ENCODE measurements at regions of chr2 and their contacts with region 1.

Region 1: GRCh38 chr2:237060534-237061312 is 25.0 kb upstream of the COPS8 start:
- DNase-seq: peak in 1 of 2 donors; percentile 55
- ATAC-seq: peak; percentile 66 to 79 (median 76)
- H3K4me3 ChIP-seq: no peak overlapping the region
- H3K27ac ChIP-seq: no peak overlapping the region
- H3K4me1 ChIP-seq: peaks cover 0 to 13% (median 4%) of the 10 kb centered on the region in 9 donors
- H3K27me3 ChIP-seq: no peaks in the 10 kb centered on the region
- CTCF ChIP-seq: peak; percentile 41 to 78 (median 72)

Region 2: GRCh38 chr2:235766278-235766677 is 1294.4 kb before region 1 on chr2:
- intact Hi-C with region 1: loop called in 3 of 10 experiments (anchors 5 to 10 kb)
- DNase-seq: peak in 1 of 2 donors; percentile 83
- ATAC-seq: peak; percentile 86 to 94 (median 88)
- H3K4me3 ChIP-seq: no peak overlapping the region
- H3K27ac ChIP-seq: no peak overlapping the region
- H3K4me1 ChIP-seq: peaks cover 0 to 5% (median 0%) of the 10 kb centered on the region in 9 donors
- H3K27me3 ChIP-seq: no peaks in the 10 kb centered on the region
- CTCF ChIP-seq: peak; percentile 85 to 97 (median 93)

Region 3: GRCh38 chr2:236343400-236344161 is 717.1 kb before region 1 on chr2:
- intact Hi-C with region 1: loop called in 2 of 10 experiments (anchors 2 kb)
- DNase-seq: peak in 1 of 2 donors; percentile 51
- ATAC-seq: peak in 1 of 8 donors; percentile 21
- H3K4me3 ChIP-seq: no peak overlapping the region
- H3K27ac ChIP-seq: peak overlapping the region in 1 of 10 donors; percentile 76
- H3K4me1 ChIP-seq: peaks cover 0 to 50% (median 10%) of the 10 kb centered on the region in 9 donors
- H3K27me3 ChIP-seq: no peaks in the 10 kb centered on the region
- CTCF ChIP-seq: peak; percentile 73 to 91 (median 83)

Region 4: GRCh38 chr2:236352761-236353593 is 707.7 kb before region 1 on chr2:
- intact Hi-C with region 1: loop called (anchors 1 to 5 kb)
- DNase-seq: no peak
- ATAC-seq: peak in 3 of 8 donors; percentile 46 to 57 (median 51)
- H3K4me3 ChIP-seq: no peak overlapping the region
- H3K27ac ChIP-seq: no peak overlapping the region
- H3K4me1 ChIP-seq: peaks cover 0 to 7% (median 0%) of the 10 kb centered on the region in 9 donors
- H3K27me3 ChIP-seq: no peaks in the 10 kb centered on the region
- CTCF ChIP-seq: peak; percentile 69 to 92 (median 84)

Region 5: GRCh38 chr2:237012577-237013267 is 48.0 kb before region 1 on chr2:
- intact Hi-C with region 1: no loop called
- DNase-seq: no peak
- ATAC-seq: peak in 3 of 8 donors; percentile 25 to 42 (median 30)
- H3K4me3 ChIP-seq: no peak overlapping the region
- H3K27ac ChIP-seq: no peak overlapping the region
- H3K4me1 ChIP-seq: peaks cover 0 to 10% (median 5%) of the 10 kb centered on the region in 9 donors
- H3K27me3 ChIP-seq: no peaks in the 10 kb centered on the region
- CTCF ChIP-seq: no peak